ENCODE measurements at regions of chr12 and their contacts with region 1.

Region 1: DNA sequence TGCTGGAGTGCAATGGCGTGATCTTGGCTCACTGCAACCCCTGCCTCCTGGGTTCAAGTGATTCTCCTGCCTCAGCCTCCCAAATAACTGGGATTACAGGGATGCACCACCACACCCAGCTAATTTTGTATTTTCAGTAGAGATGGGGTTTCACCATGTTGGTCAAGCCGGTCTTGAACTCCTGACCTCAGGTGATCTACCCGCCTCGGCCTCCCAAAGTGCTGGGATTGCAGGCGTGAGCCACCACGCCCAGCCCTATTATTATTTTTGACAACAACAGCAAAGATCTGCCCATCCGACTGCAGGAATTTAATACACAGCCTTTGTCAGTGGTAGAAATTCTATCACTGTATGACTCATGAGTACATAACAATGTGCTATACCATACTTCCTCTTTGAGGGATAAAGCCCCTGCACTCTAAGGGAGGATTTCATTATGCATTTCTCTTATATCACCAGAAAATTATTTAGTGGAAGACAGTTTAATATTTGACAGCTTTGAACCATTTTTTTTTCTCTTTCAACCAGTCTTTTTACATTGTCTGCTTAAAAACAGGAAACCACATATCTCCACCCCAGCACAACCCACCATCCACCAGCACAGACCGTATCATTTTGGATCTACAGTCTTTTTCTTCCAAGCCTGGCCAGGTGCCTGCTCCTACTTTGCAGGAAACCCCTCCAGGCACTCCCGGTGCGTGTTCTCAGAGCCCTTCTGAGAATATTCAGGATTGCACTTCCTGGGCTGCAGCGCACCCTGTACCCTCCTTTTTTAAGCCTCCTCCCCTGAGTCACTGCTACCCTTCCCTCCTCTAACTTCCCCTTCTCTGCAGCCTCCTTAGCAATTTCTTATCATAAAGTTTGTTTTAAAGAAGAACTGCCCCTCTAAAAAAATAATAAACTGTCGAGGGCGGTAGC is 594 bp downstream of the ARHGDIB start:
- DNase-seq: peak; percentile 43
- H3K4me3 Mint-ChIP-seq: peak overlapping the region; percentile 96
- H3K27ac Mint-ChIP-seq: peak overlapping the region; percentile 97
- H3K4me1 Mint-ChIP-seq: peaks cover 58% of the 10 kb centered on the region
- H3K27me3 Mint-ChIP-seq: no peaks in the 10 kb centered on the region

Region 2: GRCh38 chr12:14803011-14803829 is 157.6 kb before region 1 on chr12 and contains the starts of genes C12orf60 and WBP11:
- intact Hi-C with region 1: loop called (anchors 1 kb)
- DNase-seq: peak; percentile 83
- H3K4me3 Mint-ChIP-seq: no peak within 1 kb of the TSS
- H3K27ac Mint-ChIP-seq: no peak within 1 kb of the TSS
- H3K4me1 Mint-ChIP-seq: peaks cover 27% of the 10 kb centered on the region
- H3K27me3 Mint-ChIP-seq: no peaks in the 10 kb centered on the region
- total RNA-seq, gene C12orf60: 2.2 and 2.8 TPM in 2 replicates
- total RNA-seq, gene WBP11: 128 and 134 TPM in 2 replicates

Region 3: GRCh38 chr12:14920475-14921126 is 40.2 kb before region 1 on chr12:
- intact Hi-C with region 1: no loop called
- DNase-seq: no peak
- H3K4me3 Mint-ChIP-seq: no peak overlapping the region
- H3K27ac Mint-ChIP-seq: peak overlapping the region; percentile 10
- H3K4me1 Mint-ChIP-seq: peaks cover 15% of the 10 kb centered on the region
- H3K27me3 Mint-ChIP-seq: no peaks in the 10 kb centered on the region

Region 4: DNA sequence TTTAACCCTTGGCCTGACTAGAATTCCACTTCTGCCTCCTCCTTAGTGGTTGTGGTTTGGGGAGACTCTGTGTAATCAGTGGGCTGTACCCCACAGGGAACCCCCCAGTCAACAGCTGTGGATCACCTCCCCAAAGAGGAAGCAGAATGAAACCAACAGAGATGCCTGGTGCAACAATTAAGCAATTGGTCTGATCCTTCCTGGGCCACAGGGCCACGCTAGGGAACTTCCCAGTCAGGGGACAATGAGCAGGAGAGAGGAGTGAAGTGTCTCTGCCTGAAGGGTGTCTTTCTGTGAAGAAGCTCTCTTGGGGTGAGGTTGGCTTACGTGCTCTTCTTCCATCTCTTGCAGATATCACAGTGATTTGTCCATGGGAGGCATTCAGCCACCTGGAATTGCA is 20.2 kb after region 1 on chr12:
- intact Hi-C with region 1: no loop called
- DNase-seq: no peak
- H3K4me3 Mint-ChIP-seq: no peak overlapping the region
- H3K27ac Mint-ChIP-seq: no peak overlapping the region
- H3K4me1 Mint-ChIP-seq: peaks cover 50% of the 10 kb centered on the region
- H3K27me3 Mint-ChIP-seq: no peaks in the 10 kb centered on the region